ENCODE measurements at regions of chr12 and their contacts with region 1.

Region 1: DNA sequence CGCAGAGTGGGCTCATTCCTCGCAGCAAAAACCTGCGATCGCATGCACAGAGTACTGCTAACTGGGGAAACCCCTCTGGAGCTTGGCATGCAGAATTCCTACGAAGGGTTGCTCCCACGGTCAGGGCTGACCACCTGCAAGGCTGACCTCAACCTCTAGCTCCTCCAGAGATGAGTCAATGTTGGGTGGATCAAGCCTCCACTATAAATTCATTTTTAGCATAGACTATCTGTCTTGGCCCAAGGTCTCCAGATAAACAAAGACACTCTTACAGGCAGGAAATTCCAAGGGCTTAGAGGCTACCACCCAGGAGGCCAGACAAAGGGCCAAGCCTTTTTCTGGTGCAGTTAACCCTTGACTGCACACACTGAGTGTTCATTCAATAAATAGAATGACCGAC is 296.5 kb downstream of the TMEM132D start:
- DNase-seq: no peak
- H3K4me3 ChIP-seq: no peak overlapping the region
- H3K4me3 Mint-ChIP-seq: no peak overlapping the region
- H3K27ac Mint-ChIP-seq: no peak overlapping the region
- H3K4me1 ChIP-seq: no peaks in the 10 kb centered on the region
- H3K4me1 Mint-ChIP-seq: no peaks in the 10 kb centered on the region
- H3K27me3 ChIP-seq: no peaks in the 10 kb centered on the region
- H3K27me3 Mint-ChIP-seq: no peaks in the 10 kb centered on the region
- CTCF ChIP-seq: no peak

Region 2: GRCh38 chr12:129459886-129460285 is 147.4 kb before region 1 on chr12:
- CTCF ChIA-PET with region 1: no interaction called
- POLR2A ChIA-PET with region 1: no interaction called
- intact Hi-C with region 1: no loop called
- DNase-seq: no peak
- H3K4me3 ChIP-seq: no peak overlapping the region
- H3K4me3 Mint-ChIP-seq: no peak overlapping the region
- H3K27ac Mint-ChIP-seq: no peak overlapping the region
- H3K4me1 ChIP-seq: no peaks in the 10 kb centered on the region
- H3K4me1 Mint-ChIP-seq: no peaks in the 10 kb centered on the region
- H3K27me3 ChIP-seq: no peaks in the 10 kb centered on the region
- H3K27me3 Mint-ChIP-seq: peaks cover 2% of the 10 kb centered on the region
- CTCF ChIP-seq: no peak

Region 3: DNA sequence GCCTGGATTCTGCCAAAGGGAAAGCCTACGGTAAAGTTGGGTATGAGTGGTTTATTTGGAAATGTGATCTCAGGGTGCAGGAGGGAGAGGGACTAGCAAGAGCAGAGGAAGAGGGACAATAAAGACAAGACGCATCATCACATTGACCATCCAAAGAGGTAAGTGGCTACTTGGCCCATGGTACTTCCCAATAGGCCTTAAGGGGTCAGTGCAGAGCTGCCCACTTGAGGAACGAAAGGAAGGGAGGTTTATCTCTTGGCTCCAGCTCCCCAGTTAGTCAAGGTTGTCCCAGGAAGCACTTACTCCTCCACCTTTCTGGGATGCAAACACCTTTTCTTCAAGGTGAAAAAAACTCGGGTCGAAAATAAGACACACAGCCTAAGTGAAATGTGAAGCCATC is 27.4 kb before region 1 on chr12:
- CTCF ChIA-PET with region 1: no interaction called
- POLR2A ChIA-PET with region 1: no interaction called
- intact Hi-C with region 1: no loop called
- DNase-seq: no peak
- H3K4me3 ChIP-seq: no peak overlapping the region
- H3K4me3 Mint-ChIP-seq: no peak overlapping the region
- H3K27ac Mint-ChIP-seq: no peak overlapping the region
- H3K4me1 ChIP-seq: no peaks in the 10 kb centered on the region
- H3K4me1 Mint-ChIP-seq: no peaks in the 10 kb centered on the region
- H3K27me3 ChIP-seq: no peaks in the 10 kb centered on the region
- H3K27me3 Mint-ChIP-seq: no peaks in the 10 kb centered on the region
- CTCF ChIP-seq: no peak

Region 4: DNA sequence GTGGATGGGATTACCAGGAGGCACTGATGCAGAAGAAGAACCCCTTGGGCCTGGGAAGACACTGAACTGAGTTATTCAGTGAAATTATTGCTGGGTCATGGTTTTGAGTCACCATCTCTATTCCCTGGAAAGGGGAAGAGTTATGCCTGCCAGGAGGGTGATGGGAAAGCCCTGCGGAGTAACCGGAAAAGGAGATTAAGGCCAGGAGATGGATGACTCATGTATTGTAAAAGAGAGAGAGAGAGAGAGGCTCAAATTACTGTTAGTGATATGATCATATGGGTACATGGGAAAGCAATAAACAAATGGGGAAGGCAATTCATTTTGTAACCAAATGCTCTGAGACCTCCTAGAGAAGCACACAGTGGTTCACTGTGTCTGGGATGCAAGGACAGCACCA is 52.6 kb after region 1 on chr12:
- CTCF ChIA-PET with region 1: no interaction called
- POLR2A ChIA-PET with region 1: no interaction called
- intact Hi-C with region 1: loop called (anchors 2 kb)
- DNase-seq: no peak
- H3K4me3 ChIP-seq: no peak overlapping the region
- H3K4me3 Mint-ChIP-seq: no peak overlapping the region
- H3K27ac Mint-ChIP-seq: no peak overlapping the region
- H3K4me1 ChIP-seq: no peaks in the 10 kb centered on the region
- H3K4me1 Mint-ChIP-seq: no peaks in the 10 kb centered on the region
- H3K27me3 ChIP-seq: no peaks in the 10 kb centered on the region
- H3K27me3 Mint-ChIP-seq: no peaks in the 10 kb centered on the region
- CTCF ChIP-seq: no peak